ENCODE measurements at regions of chr10 and their contacts with region 1.

Region 1: GRCh38 chr10:124992462-124993344 is 50.8 kb downstream of the ZRANB1 start:
- DNase-seq: peak; percentile 77
- H3K4me3 ChIP-seq: no peak overlapping the region
- H3K27ac ChIP-seq: no peak overlapping the region
- H3K4me1 ChIP-seq: no peaks in the 10 kb centered on the region
- H3K27me3 ChIP-seq: no peaks in the 10 kb centered on the region
- CTCF ChIP-seq: peak; percentile 70

Region 2: GRCh38 chr10:124791378-124792348 is 201.0 kb before region 1 on chr10 and contains the start of gene EEF1AKMT2:
- intact Hi-C with region 1: no loop called
- DNase-seq: peak; percentile 84
- H3K4me3 ChIP-seq: peak within 1 kb of the TSS; percentile 99
- H3K27ac ChIP-seq: peak within 1 kb of the TSS; percentile 87
- H3K4me1 ChIP-seq: no peaks in the 10 kb centered on the region
- H3K27me3 ChIP-seq: no peaks in the 10 kb centered on the region
- CTCF ChIP-seq: peak; percentile 27
- total RNA-seq, gene EEF1AKMT2: 14.7 to 16.5 TPM

Region 3: GRCh38 chr10:125060826-125061556 is 68.3 kb after region 1 on chr10:
- intact Hi-C with region 1: loop called (anchors 5 kb)
- DNase-seq: peak; percentile 92
- H3K4me3 ChIP-seq: no peak overlapping the region
- H3K27ac ChIP-seq: peak overlapping the region; percentile 52
- H3K4me1 ChIP-seq: peaks cover 26% of the 10 kb centered on the region
- H3K27me3 ChIP-seq: no peaks in the 10 kb centered on the region
- CTCF ChIP-seq: peak; percentile 75